ENCODE measurements at regions of chr12 and their contacts with region 1.

Region 1: DNA sequence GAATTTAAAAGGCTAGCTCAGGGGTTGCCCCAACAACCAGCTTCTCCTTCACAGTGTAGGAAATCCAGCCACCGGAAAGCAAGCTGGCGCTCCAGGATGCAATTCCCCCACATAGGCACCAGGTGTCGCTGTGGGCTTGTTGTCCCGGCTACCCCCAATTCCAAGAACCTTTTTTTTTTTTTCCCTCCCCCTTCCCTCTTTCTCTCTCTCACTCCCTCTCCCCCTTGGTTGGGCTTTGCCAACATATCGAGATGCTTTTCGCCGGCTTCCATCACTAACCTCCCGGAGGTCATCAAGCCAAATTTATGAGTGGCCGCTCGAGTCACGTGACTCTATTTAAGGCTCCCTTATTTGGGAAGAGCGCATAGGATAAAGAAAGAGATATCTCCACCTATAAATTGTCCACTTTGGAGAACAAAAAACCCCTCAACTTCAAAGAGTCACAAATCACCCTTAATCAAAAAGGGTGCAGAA is at the start of gene HOXC5:
- DNase-seq: peak; percentile 77
- H3K4me3 Mint-ChIP-seq: peak within 1 kb of the TSS; percentile 39
- H3K27ac Mint-ChIP-seq: peak within 1 kb of the TSS; percentile 74
- H3K4me1 Mint-ChIP-seq: peaks cover 23% of the 10 kb centered on the region
- H3K27me3 Mint-ChIP-seq: peaks cover 100% of the 10 kb centered on the region

Region 2: GRCh38 chr12:53645165-53645564 is 387.5 kb before region 1 on chr12:
- CTCF ChIA-PET with region 1: no interaction called
- DNase-seq: no peak
- H3K4me3 Mint-ChIP-seq: no peak overlapping the region
- H3K27ac Mint-ChIP-seq: no peak overlapping the region
- H3K4me1 Mint-ChIP-seq: no peaks in the 10 kb centered on the region
- H3K27me3 Mint-ChIP-seq: peaks cover 7% of the 10 kb centered on the region

Region 3: DNA sequence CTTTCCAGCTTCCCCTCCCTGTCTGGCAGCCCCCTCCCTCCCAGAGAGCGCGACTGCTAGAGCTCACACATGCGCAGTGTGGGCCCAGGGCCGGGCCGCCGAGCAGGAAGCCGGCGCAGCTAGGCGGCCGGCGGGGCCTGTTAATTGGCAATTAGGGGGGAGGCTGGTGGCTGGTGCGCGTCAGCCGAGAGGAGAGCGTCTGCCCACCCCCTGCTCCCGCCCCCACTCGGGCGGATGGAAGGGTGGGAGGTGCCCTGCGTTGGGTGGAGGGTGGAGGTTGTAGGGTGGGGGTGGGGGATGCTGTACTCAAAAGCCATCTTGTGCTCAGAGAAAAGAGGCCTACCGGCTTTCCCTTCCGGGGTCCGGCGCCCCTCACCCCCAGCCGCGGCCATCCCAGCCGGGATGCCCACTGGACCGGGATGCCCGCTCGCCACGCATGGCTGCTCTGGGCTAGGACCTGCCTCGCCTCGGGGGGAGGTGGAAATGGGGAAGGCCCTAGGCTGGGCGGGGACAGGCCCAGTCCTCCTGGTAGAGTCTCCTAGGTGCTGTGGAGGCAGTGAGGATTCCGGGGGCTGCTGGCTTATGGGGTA is 14.7 kb before region 1 on chr12:
- CTCF ChIA-PET with region 1: interaction called, 22 read pairs
- DNase-seq: peak; percentile 80
- H3K4me3 Mint-ChIP-seq: peak overlapping the region; percentile 73
- H3K27ac Mint-ChIP-seq: no peak overlapping the region
- H3K4me1 Mint-ChIP-seq: peaks cover 26% of the 10 kb centered on the region
- H3K27me3 Mint-ChIP-seq: peaks cover 100% of the 10 kb centered on the region

Region 4: DNA sequence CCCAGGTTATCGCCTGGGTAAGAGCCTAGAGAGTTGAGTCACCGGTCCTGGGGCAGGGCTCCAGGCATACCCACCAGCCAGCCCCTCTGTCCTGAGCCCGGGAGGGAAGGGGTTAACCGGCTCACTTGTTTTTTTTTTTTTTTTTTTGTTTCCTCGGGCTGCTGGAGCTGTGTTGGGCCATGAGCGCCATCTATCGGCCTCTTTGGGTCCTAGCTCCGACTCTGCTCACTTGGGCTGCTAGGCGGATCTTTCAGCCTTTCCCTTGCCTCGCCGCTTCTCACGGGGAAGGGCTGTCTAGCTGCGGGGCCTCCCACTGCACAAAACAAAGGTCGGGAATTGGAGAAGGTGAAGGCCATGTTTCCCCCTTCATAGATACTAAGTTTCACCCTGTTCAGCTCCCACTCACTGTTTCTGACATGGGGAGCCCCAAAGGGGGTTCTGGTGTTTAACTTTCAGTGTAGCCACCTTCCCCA is 158.9 kb after region 1 on chr12:
- CTCF ChIA-PET with region 1: interaction called, 93 read pairs
- DNase-seq: peak; percentile 85
- H3K4me3 Mint-ChIP-seq: no peak overlapping the region
- H3K27ac Mint-ChIP-seq: no peak overlapping the region
- H3K4me1 Mint-ChIP-seq: peaks cover 20% of the 10 kb centered on the region
- H3K27me3 Mint-ChIP-seq: peaks cover 66% of the 10 kb centered on the region

Region 5: DNA sequence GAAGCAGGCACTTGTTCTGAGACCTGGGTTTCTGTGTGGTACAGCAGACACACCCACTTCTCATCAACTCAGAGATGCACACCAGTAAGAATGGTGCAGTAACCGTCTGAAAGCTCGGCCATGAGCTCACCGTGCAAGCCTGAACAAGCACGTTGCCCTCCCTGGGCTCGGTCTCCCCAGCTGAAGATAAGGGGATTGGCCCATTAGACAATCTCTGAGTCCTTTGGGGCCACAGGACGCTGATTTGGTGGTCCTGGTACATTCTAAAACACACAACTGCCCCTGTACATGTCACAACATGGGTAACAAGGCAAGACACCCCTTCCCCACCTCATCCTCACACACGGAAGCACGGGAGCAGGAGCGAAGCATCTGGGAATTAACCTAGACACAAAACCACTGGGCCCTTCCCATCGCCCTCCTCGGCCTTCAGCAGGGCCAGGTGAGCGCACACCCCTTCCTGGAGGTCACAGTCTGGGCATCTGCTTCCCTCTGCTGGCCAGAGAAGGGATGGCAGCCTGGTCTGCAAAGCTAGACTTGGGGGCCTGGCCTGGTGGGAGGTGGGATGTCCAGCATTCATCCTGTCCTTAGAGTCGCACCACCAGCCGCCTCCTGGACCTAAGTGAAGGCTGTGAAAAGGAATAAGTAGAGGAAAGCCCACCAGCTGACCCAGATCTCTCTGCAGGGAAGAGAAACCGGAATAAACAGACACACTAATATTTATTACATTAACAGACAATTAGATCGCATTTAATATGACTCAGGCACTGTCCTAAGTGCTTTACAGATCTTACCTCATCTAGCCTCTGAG is 175.0 kb after region 1 on chr12:
- CTCF ChIA-PET with region 1: interaction called, 49 read pairs
- DNase-seq: peak; percentile 87
- H3K4me3 Mint-ChIP-seq: no peak overlapping the region
- H3K27ac Mint-ChIP-seq: no peak overlapping the region
- H3K4me1 Mint-ChIP-seq: peaks cover 4% of the 10 kb centered on the region
- H3K27me3 Mint-ChIP-seq: peaks cover 82% of the 10 kb centered on the region